ENCODE measurements at regions of chr17 and their contacts with region 1.

Region 1: DNA sequence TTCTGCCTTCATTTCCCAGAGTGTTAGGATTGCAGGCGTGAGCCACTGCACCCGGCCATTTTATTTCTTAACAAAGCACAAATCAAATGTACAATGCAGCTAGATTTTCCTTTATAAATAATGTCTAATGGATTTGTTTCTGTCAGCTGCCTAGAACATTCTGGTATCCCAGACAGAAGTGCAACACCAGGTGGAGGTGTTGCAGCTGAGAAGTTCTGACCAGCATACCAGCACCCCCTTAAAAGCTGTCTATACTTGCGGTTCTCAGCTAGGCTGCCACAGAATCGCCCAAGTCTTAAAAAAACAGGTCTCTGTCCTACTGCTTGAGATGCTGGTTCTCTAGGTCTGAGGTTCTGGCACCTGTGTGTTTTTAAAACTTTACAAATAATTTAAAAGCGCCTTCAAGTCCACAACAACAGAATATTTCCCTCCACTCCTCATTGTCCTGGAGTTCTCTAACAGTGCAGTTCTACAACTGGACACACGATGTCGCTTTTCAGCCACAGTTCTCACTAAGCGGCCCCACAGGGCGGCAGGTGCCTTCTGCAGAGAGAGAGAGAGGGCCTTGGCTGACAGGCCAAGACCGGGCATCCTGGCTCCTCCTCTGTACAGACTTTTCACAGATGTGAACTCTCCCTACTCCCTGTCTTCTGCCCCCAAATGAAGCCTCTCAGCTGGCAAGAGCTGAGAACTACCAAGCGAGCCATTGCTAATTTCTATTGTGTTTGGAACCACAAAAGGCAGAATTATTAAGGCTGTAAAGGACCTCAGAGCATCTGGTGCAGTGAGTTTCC is 32.6 kb upstream of the MEOX1 start:
- DNase-seq: peak; percentile 42
- ATAC-seq: peak; percentile 99
- H3K4me3 Mint-ChIP-seq: no peak overlapping the region
- H3K27ac Mint-ChIP-seq: no peak overlapping the region
- H3K4me1 Mint-ChIP-seq: no peaks in the 10 kb centered on the region
- H3K27me3 Mint-ChIP-seq: peaks cover 16% of the 10 kb centered on the region
- CTCF ChIP-seq: peak; percentile 85

Region 2: GRCh38 chr17:43360739-43361505 is 333.4 kb before region 1 on chr17:
- CTCF ChIA-PET with region 1: no interaction called
- POLR2A ChIA-PET with region 1: interaction called, 10 read pairs
- intact Hi-C with region 1: no loop called
- DNase-seq: peak; percentile 65
- ATAC-seq: peak; percentile 76
- H3K4me3 Mint-ChIP-seq: peak overlapping the region; percentile 93
- H3K27ac Mint-ChIP-seq: peak overlapping the region; percentile 100
- H3K4me1 Mint-ChIP-seq: peaks cover 15% of the 10 kb centered on the region
- H3K27me3 Mint-ChIP-seq: peaks cover 2% of the 10 kb centered on the region
- CTCF ChIP-seq: no peak

Region 3: GRCh38 chr17:43760254-43760852 is 66.1 kb after region 1 on chr17:
- CTCF ChIA-PET with region 1: interaction called, 301 read pairs
- POLR2A ChIA-PET with region 1: interaction called, 4 read pairs
- intact Hi-C with region 1: loop called (anchors 1 kb)
- DNase-seq: peak; percentile 75
- ATAC-seq: peak; percentile 99
- H3K4me3 Mint-ChIP-seq: no peak overlapping the region
- H3K27ac Mint-ChIP-seq: no peak overlapping the region
- H3K4me1 Mint-ChIP-seq: no peaks in the 10 kb centered on the region
- H3K27me3 Mint-ChIP-seq: peaks cover 31% of the 10 kb centered on the region
- CTCF ChIP-seq: peak; percentile 62

Region 4: DNA sequence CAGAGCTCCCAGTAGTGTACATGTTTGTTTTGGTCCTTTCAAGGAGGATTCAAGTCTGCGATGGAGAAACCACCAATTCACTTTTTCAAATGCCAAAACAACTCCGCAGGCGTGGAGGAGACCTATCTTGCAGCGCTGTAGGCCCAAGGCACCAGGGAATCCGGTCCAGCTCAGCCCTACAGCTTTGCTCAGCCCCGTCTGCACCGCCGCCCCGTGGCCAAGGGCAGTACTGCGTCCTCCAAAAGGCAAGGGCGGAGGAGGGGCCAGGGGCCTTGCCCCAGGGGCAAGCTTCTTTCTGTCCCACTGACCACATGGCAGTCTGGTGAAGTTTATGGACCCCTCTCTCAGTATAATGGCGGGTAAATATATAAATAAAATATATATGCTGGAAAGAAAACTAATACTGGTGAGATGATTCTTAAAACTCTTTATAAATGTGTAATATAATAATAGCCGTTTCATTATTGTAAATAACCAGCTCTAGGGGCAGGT is 152.0 kb after region 1 on chr17:
- CTCF ChIA-PET with region 1: interaction called, 20 read pairs
- POLR2A ChIA-PET with region 1: no interaction called
- intact Hi-C with region 1: loop called (anchors 1 kb)
- DNase-seq: peak; percentile 72
- ATAC-seq: peak; percentile 100
- H3K4me3 Mint-ChIP-seq: no peak overlapping the region
- H3K27ac Mint-ChIP-seq: no peak overlapping the region
- H3K4me1 Mint-ChIP-seq: no peaks in the 10 kb centered on the region
- H3K27me3 Mint-ChIP-seq: peaks cover 22% of the 10 kb centered on the region
- CTCF ChIP-seq: peak; percentile 79

Measured in activated B cell treated with CpG ODN at 0.5 μM for 24 hours (primary cell).